ENCODE measurements at regions of chr11 and their contacts with region 1.

Region 1: GRCh38 chr11:86244522-86245368 is at the start of gene EED:
- DNase-seq: peak; percentile 90 to 92
- ATAC-seq: peak; percentile 92 to 94
- H3K4me3 ChIP-seq: peak within 1 kb of the TSS; percentile 88 to 94 (median 92)
- H3K27ac ChIP-seq: peak within 1 kb of the TSS; percentile 96 to 99 (median 98)
- H3K4me1 ChIP-seq: peaks cover 15 to 35% of the 10 kb centered on the region in 2 donors
- H3K27me3 ChIP-seq: no peaks in the 10 kb centered on the region
- CTCF ChIP-seq: no peak
- POLR2A ChIP-seq: peak; percentile 46 to 70
- total RNA-seq, gene EED: 5.2 to 12.1 (median 8.5) TPM

Region 2: GRCh38 chr11:85647604-85648299 is 597.0 kb before region 1 on chr11 and contains the start of gene TMEM126A:
- in situ Hi-C with region 1: no loop called
- intact Hi-C with region 1: loop called (anchors 5 kb)
- DNase-seq: peak; percentile 81 to 86
- ATAC-seq: peak; percentile 96
- H3K4me3 ChIP-seq: peak within 1 kb of the TSS; percentile 65 to 80 (median 72)
- H3K27ac ChIP-seq: peak within 1 kb of the TSS; percentile 80 to 89 (median 88)
- H3K4me1 ChIP-seq: peaks cover 14 to 19% of the 10 kb centered on the region in 2 donors
- H3K27me3 ChIP-seq: no peaks in the 10 kb centered on the region
- CTCF ChIP-seq: no peak
- POLR2A ChIP-seq: peak; percentile 34 to 56
- total RNA-seq, gene TMEM126A: 23.9 to 46.8 (median 35.3) TPM

Region 3: DNA sequence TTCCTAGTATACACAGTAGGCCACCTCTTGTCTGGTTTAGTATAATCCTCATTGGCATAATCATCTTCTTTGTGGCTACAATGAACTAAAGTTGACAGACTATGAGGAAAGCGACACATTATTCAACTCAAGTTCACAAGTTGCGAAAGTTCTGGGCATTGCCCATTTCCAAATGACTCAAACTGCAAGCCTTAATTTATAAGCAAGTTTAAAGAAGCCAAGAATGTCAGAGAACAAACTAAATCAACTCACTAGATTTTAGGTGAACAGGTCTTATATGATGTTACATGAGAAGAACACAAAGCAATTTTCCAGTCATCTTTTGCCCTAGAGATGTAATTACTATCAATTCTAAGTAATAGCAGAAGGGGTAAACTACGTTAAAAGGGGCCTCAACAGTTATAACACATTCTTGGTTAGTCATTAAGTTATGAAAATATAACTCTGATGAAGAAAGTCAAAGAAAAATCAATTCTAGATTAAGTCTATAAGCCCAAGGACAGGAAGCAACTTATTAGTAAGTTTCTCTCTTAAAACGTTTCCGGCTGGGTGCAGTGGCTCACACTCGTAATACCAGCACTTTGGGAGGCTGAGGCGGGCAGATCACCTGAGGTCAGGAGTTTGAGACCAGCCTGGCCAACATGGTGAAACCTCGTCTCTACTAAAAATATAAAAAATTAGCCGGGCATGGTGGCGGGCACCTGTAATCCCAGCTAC is 197.3 kb before region 1 on chr11:
- in situ Hi-C with region 1: no loop called
- intact Hi-C with region 1: loop called (anchors 5 kb)
- DNase-seq: no peak
- ATAC-seq: peak; percentile 60 to 63
- H3K4me3 ChIP-seq: no peak overlapping the region
- H3K27ac ChIP-seq: peak overlapping the region in 3 of 4 donors; percentile 12 to 44 (median 29)
- H3K4me1 ChIP-seq: peaks cover 86 to 87% of the 10 kb centered on the region in 2 donors
- H3K27me3 ChIP-seq: no peaks in the 10 kb centered on the region
- CTCF ChIP-seq: no peak
- POLR2A ChIP-seq: no peak

Region 4: GRCh38 chr11:86174101-86175046 is 70.4 kb before region 1 on chr11:
- in situ Hi-C with region 1: no loop called
- intact Hi-C with region 1: loop called (anchors 1 kb)
- DNase-seq: peak; percentile 91 to 95
- ATAC-seq: peak; percentile 98 to 99
- H3K4me3 ChIP-seq: no peak overlapping the region
- H3K27ac ChIP-seq: peak overlapping the region; percentile 83 to 88 (median 85)
- H3K4me1 ChIP-seq: peaks cover 40 to 51% of the 10 kb centered on the region in 2 donors
- H3K27me3 ChIP-seq: no peaks in the 10 kb centered on the region
- CTCF ChIP-seq: peak in 1 of 5 experiments; percentile 14
- POLR2A ChIP-seq: peak in 1 of 2 donors; percentile 12

Region 5: DNA sequence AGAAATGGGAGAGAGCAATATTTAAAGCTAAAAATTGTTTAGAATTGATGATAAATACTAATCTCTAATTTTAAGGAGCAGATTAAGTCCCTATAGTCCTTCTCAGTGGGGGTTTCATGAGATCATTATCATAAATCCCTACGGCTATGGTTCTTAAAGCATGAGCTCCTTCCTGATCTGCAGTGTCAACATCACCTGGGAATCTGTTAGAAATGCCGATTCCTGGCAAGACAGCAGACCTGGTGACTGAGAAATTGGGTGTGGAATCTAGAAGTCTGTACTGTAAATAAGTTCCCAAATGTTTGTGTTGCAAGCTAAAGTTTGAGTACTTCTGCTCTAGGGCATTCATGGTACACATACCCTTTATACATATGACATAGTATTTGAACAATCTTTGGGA is 69.9 kb after region 1 on chr11:
- in situ Hi-C with region 1: no loop called
- intact Hi-C with region 1: no loop called
- DNase-seq: no peak
- ATAC-seq: no peak
- H3K4me3 ChIP-seq: no peak overlapping the region
- H3K27ac ChIP-seq: no peak overlapping the region
- H3K4me1 ChIP-seq: peaks cover 0 to 3% of the 10 kb centered on the region in 2 donors
- H3K27me3 ChIP-seq: no peaks in the 10 kb centered on the region
- CTCF ChIP-seq: no peak
- POLR2A ChIP-seq: no peak

Region 6: DNA sequence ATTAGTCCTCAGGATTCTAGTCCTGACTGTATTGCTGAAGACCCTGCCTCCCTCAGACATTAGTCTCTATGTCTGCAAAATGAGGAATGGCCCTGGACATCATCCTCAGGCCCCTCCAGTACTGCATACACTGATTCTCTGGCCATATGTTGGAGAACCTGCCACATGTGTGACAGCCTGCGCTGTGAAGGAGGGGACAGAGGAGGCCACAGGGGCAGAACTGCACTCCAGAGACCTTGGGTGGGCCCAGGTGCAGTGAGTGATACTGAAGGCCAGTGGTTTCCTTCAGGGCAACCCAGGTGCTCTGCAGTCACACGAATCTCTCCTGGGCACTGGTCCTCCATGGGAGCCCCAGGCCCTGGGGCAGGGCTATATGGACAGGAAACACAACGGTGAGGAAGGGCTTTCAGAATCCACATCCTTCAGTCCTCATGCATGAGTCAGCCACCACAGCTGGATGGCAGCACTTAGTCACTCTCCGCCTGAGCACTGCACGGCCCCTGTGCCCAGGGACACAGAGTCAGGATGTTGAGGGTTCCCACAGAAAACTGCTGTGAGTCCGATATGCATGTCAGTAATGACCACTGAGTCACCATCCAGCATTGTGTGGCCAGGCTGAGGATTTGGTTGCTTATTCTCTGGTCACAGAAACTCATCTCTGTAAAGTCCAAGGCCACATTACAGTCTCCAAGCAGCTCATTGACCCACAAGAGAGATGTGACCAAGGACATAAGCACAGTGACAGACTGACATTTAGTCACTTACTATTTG is 387.9 kb after region 1 on chr11:
- in situ Hi-C with region 1: no loop called
- intact Hi-C with region 1: no loop called
- DNase-seq: no peak
- ATAC-seq: peak in 1 of 2 donors; percentile 28
- H3K4me3 ChIP-seq: no peak overlapping the region
- H3K27ac ChIP-seq: no peak overlapping the region
- H3K4me1 ChIP-seq: peaks cover 30% of the 10 kb centered on the region in 2 donors
- H3K27me3 ChIP-seq: no peaks in the 10 kb centered on the region
- CTCF ChIP-seq: peak in 2 of 5 experiments; percentile 18 to 28
- POLR2A ChIP-seq: no peak

Region 7: GRCh38 chr11:86671682-86672621 is 427.2 kb after region 1 on chr11 and contains the start of gene ME3:
- in situ Hi-C with region 1: no loop called
- intact Hi-C with region 1: loop called (anchors 10 kb)
- DNase-seq: peak; percentile 53 to 75
- ATAC-seq: peak; percentile 79 to 80
- H3K4me3 ChIP-seq: peak within 1 kb of the TSS; percentile 64 to 95 (median 90)
- H3K27ac ChIP-seq: peak within 1 kb of the TSS; percentile 88 to 98 (median 96)
- H3K4me1 ChIP-seq: peaks cover 26 to 54% of the 10 kb centered on the region in 2 donors
- H3K27me3 ChIP-seq: no peaks in the 10 kb centered on the region
- CTCF ChIP-seq: peak in 1 of 5 experiments; percentile 22
- POLR2A ChIP-seq: peak; percentile 41 to 54
- total RNA-seq, gene ME3: 4.2 to 17.0 (median 15.7) TPM